ENCODE measurements at regions of chr11 and their contacts with region 1.

Region 1: GRCh38 chr11:78564490-78565467 is 9.9 kb downstream of the NARS2 start:
- DNase-seq: no peak
- H3K4me3 ChIP-seq: no peak overlapping the region
- CTCF ChIP-seq: peak; percentile 34

Region 2: GRCh38 chr11:78079232-78080083 is 485.3 kb before region 1 on chr11 and contains the start of gene NDUFC2:
- CTCF ChIA-PET with region 1: interaction called, 19 read pairs
- POLR2A ChIA-PET with region 1: interaction called, 3 read pairs
- DNase-seq: no peak
- H3K4me3 ChIP-seq: peak within 1 kb of the TSS; percentile 91
- CTCF ChIP-seq: no peak

Region 3: GRCh38 chr11:78188286-78189173 is 376.2 kb before region 1 on chr11 and contains the starts of genes KCTD21 and USP35:
- CTCF ChIA-PET with region 1: interaction called, 19 read pairs
- POLR2A ChIA-PET with region 1: no interaction called
- DNase-seq: peak; percentile 59
- H3K4me3 ChIP-seq: peak within 1 kb of the TSS; percentile 96
- CTCF ChIP-seq: no peak

Region 4: DNA sequence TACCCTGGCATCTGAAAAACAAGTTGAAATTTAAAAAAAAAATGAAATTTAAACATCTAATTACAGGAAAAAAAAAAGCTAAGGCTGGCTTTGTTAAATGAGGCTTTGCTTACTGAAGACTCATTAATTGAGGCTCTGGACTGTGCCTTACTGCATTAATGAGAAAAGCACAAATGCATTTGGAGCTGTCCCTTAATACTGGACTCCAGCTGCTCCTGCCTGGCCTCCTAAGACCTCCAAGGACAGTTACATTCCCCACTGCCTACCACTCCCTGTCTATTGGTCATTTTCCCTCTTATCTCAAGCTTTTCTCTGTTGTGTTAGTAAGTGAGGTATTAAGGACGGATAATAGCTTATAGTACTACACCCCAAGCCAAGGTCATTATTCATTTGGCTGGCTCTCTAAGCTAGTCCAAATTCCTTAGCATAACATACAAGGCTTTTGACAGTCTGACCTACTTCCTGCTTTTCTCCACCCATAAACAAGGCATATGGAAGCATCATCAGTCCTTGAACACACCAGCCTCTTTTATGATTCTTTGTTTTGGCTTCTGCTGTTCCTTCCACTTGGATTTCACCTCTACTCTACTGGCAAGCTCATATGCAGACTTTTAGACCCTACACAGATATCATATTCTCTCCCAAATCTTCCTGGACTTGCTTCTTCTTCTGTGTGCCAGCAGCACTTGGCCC is 313.6 kb before region 1 on chr11:
- CTCF ChIA-PET with region 1: interaction called, 13 read pairs
- POLR2A ChIA-PET with region 1: no interaction called
- DNase-seq: no peak
- H3K4me3 ChIP-seq: no peak overlapping the region
- CTCF ChIP-seq: no peak

Region 5: DNA sequence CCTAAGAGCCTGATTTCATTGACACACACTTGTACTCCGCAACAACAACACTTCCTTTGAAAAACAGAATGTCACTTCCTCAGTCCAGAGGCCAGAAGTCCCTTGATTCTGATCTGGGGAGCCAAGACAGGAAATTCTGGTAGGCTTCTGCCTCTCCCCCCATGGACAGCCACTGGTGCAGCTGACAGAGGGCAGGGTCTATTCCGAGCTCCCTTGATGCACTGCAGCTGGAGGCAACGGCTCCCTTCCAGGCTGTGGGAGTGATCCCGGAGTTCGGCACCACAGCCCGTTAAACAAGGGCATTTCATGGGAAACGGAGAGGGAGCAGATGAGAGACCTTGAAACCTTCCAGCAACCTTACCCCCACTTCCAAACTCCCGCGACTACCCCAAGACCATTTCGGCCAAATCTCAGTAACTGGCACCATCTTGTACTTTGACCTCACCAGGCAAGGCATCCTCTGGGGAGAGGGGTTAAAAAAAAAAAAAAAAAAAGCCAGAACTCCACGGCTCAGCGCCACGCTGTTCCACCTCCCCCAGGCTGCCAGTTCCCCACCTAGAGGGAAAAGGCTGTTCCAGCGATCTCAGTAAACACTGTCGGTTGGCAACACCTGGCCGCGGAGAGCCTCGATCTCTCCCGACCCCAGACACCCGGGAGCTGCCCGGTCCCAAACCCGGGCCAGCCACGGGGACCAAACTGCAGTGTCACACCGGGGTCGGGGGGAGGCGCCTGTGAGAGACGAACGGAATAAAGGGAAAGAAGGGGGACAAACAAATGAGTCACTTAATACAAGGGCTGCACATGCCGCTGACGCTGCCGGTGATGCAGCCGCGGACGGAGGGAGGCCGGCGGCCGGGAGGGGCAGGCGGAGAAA is 148.2 kb before region 1 on chr11:
- CTCF ChIA-PET with region 1: interaction called, 135 read pairs
- POLR2A ChIA-PET with region 1: interaction called, 3 read pairs
- DNase-seq: peak; percentile 45
- H3K4me3 ChIP-seq: peak overlapping the region; percentile 64
- CTCF ChIP-seq: peak; percentile 59

Region 6: DNA sequence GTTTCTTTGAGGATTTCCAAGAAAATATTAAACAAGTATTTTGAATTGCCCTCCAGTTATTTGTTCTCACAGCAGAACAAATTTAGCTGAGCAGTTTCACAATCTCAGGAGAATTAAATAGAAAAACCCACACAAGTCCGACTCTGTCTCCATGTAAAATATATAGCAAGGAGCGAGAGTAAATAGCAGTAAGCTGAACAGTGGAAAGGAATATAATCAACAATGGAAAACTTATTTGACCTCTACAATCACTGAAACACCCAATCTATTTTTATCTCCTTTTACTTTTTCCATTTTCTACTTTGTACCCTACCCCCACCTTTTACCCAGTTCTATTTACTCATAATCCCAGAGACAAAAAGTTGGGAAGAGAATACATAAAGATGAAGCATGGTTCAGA is 24.5 kb before region 1 on chr11:
- CTCF ChIA-PET with region 1: interaction called, 10 read pairs
- POLR2A ChIA-PET with region 1: no interaction called
- DNase-seq: no peak
- H3K4me3 ChIP-seq: no peak overlapping the region
- CTCF ChIP-seq: no peak

Region 7: GRCh38 chr11:78605296-78605695 is 40.5 kb after region 1 on chr11:
- CTCF ChIA-PET with region 1: no interaction called
- POLR2A ChIA-PET with region 1: no interaction called
- DNase-seq: no peak
- H3K4me3 ChIP-seq: no peak overlapping the region
- CTCF ChIP-seq: no peak

Measured in AG04449 (cell line).